Dorsolateral prefrontal cortex (tissue), 120 donors: ENCODE measurements at regions of chr2 and their contacts with region 1.

Region 1: DNA sequence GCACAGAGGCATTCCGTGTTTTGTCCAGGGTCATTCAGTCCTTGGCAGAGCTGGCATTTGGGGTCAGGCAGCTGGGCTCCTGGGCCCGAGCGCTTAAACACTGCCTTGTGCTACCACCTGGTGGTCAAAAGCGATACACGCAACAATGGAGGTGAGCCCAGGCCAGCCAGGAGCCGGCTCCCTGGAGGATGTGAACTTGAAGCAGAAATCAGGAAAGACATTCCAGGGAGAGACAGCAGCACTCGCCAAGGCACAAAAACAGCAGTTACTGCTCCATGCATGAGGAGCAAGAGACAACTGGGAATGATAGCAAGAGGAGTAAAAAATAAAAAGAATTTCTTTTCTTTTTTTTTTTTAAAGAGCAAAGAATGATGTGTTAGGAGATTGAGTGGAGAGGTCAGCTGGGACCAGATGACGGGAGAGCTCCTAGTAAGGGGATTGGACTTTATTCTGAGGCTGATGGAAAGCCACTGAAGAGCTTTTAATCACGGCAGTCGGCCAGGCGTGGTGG is 20.7 kb downstream of the SCYGR8 start:
- DNase-seq: peak; percentile 57 to 83 (median 78)
- H3K4me3 ChIP-seq: no peak overlapping the region
- H3K27ac ChIP-seq: peak overlapping the region in 7 of 59 donors; percentile 18 to 61 (median 44)
- H3K27me3 ChIP-seq: no peaks in the 10 kb centered on the region
- CTCF ChIP-seq: peak; percentile 81 to 98 (median 91)

Region 2: GRCh38 chr2:227324995-227325838 is 441.2 kb before region 1 on chr2 and contains the start of gene MFF:
- intact Hi-C with region 1: loop called in 1 of 2 experiments (anchors 10 kb)
- DNase-seq: peak; percentile 83 to 95 (median 92)
- H3K4me3 ChIP-seq: peak within 1 kb of the TSS; percentile 70 to 100 (median 97)
- H3K27ac ChIP-seq: peak within 1 kb of the TSS; percentile 27 to 98 (median 93)
- H3K27me3 ChIP-seq: no peaks in the 10 kb centered on the region
- CTCF ChIP-seq: peak in 51 of 56 donors; percentile 1 to 71 (median 40)
- total RNA-seq, gene MFF: 80.8 to 145 (median 108) TPM

Region 3: DNA sequence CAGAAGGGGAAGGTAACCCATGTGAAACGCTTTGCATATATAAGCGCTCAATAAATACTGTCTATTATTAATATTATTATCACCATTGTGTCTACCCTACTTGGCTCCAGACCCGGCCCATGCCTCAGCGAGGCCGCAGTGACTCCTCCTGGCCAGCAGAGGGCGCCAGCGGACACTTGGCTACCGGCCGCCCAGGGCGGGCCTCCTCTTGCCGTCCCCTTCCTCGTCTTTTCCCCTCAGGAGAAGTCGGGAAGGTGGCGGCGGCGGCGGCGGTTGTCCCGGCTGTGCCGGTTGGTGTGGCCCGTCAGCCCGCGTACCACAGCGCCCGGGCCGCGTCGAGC is 294.5 kb before region 1 on chr2 and contains the start of gene AGFG1:
- intact Hi-C with region 1: loop called in 1 of 2 experiments (anchors 10 kb)
- DNase-seq: peak; percentile 72 to 93 (median 82)
- H3K4me3 ChIP-seq: peak within 1 kb of the TSS; percentile 54 to 95 (median 85)
- H3K27ac ChIP-seq: peak within 1 kb of the TSS in 55 of 59 donors; percentile 34 to 93 (median 79)
- H3K27me3 ChIP-seq: no peaks in the 10 kb centered on the region
- CTCF ChIP-seq: peak; percentile 93 to 100 (median 98)
- total RNA-seq, gene AGFG1: 79.9 to 144 (median 106) TPM

Region 4: GRCh38 chr2:227655454-227655853 is 111.0 kb before region 1 on chr2:
- intact Hi-C with region 1: loop called (anchors 2 to 5 kb)
- DNase-seq: no peak
- H3K4me3 ChIP-seq: no peak overlapping the region
- H3K27ac ChIP-seq: no peak overlapping the region
- H3K27me3 ChIP-seq: no peaks in the 10 kb centered on the region
- CTCF ChIP-seq: no peak

Region 5: GRCh38 chr2:227703280-227703732 is 63.1 kb before region 1 on chr2:
- intact Hi-C with region 1: no loop called
- DNase-seq: no peak
- H3K4me3 ChIP-seq: no peak overlapping the region
- H3K27ac ChIP-seq: no peak overlapping the region
- H3K27me3 ChIP-seq: no peaks in the 10 kb centered on the region
- CTCF ChIP-seq: no peak

Region 6: GRCh38 chr2:228016402-228016801 is 250.0 kb after region 1 on chr2:
- intact Hi-C with region 1: no loop called
- DNase-seq: no peak
- H3K4me3 ChIP-seq: no peak overlapping the region
- H3K27ac ChIP-seq: no peak overlapping the region
- H3K27me3 ChIP-seq: peaks cover 0 to 10% (median 0%) of the 10 kb centered on the region in 45 donors
- CTCF ChIP-seq: no peak